ENCODE measurements at regions of chr2 and their contacts with region 1.

Region 1: GRCh38 chr2:73385595-73386341 is at the start of gene ALMS1:
- DNase-seq: peak; percentile 89
- H3K4me3 Mint-ChIP-seq: peak within 1 kb of the TSS; percentile 89
- H3K27ac Mint-ChIP-seq: peak within 1 kb of the TSS; percentile 90
- H3K4me1 Mint-ChIP-seq: peaks cover 27% of the 10 kb centered on the region
- H3K27me3 Mint-ChIP-seq: peaks cover 9% of the 10 kb centered on the region
- total RNA-seq, gene ALMS1: 19.0 and 21.6 TPM in 2 replicates

Region 2: DNA sequence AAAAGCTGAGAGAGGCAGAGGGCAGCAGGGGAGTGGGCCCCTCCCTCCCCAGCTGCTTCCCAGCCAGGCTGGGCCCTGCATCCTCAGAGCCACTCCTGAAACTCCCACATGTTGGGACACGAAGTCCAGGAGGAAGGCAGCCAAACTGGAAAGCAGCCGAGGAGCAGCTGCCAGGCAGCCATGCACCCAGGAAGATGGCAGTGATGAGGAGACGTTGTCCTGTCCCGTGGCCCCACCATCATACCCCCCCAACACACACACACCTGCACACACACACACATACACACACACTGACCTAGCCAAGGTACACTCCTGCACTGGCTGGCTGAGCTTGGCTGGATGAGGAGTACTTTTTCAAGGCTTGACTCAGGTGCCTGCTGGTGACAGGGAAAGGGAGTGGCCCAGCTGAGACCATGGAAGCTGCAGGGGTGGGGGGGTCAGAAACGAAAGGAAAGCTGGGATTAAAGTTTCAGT is 1344.1 kb before region 1 on chr2:
- intact Hi-C with region 1: no loop called
- DNase-seq: no peak
- H3K4me3 Mint-ChIP-seq: no peak overlapping the region
- H3K27ac Mint-ChIP-seq: no peak overlapping the region
- H3K4me1 Mint-ChIP-seq: no peaks in the 10 kb centered on the region
- H3K27me3 Mint-ChIP-seq: no peaks in the 10 kb centered on the region

Region 3: GRCh38 chr2:73293534-73294171 is 92.1 kb before region 1 on chr2 and contains the start of gene EGR4:
- intact Hi-C with region 1: loop called (anchors 1 kb)
- DNase-seq: peak; percentile 87
- H3K4me3 Mint-ChIP-seq: peak within 1 kb of the TSS; percentile 69
- H3K27ac Mint-ChIP-seq: no peak within 1 kb of the TSS
- H3K4me1 Mint-ChIP-seq: peaks cover 5% of the 10 kb centered on the region
- H3K27me3 Mint-ChIP-seq: peaks cover 67% of the 10 kb centered on the region
- total RNA-seq, gene EGR4: 0.46 and 0.53 TPM in 2 replicates

Measured in activated T-helper 2 cell treated with anti-CD3 and anti-CD28 coated beads, Interferon-gamma antibody, Interleukin-2, Interleukin-4, amounts not matched to agents 10 μg/mL and 5 μg/mL and 100 μg/mL, durations not matched to agents 14 hours and 24 hours and 36 hours (primary cell).